Activated CD8-positive, alpha-beta memory T cell treated with anti-CD3 and anti-CD28 coated beads, Interleukin-2, amount 10 ng/mL, durations not matched to agents 7 days and 5 days (primary cell): ENCODE measurements at regions of chr4 and their contacts with region 1.

Region 1: DNA sequence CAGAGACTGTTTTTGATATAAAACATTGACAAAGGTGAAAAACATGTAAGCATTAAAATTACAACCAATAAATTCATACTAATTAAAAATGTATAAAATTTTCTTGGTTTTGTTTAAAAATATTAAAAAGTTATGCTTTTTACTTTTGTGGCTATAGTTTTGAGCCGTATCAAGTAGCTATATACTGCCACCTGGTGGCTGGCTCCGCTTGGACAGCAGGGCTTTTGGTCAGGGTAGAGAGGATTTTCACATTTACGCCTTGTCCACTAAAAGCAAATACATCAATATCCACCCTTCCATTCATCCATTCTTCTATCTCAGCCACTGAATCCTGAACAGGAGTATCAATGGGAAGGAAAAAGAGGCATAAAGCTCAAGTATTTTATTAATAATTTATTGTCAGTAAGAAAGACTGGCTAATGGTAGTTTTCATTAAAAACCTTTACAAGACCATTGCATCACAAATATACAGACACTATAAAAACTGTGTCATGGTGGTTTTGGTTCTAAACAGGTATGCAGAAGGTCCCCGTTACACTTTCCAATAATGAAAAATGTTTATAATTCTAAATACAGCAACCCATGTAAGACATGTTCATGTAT is 32.1 kb upstream of the MTNR1A start:
- DNase-seq: peak; percentile 59
- ATAC-seq: no peak
- H3K4me3 Mint-ChIP-seq: no peak overlapping the region
- H3K27ac Mint-ChIP-seq: no peak overlapping the region
- H3K4me1 Mint-ChIP-seq: no peaks in the 10 kb centered on the region
- H3K27me3 Mint-ChIP-seq: peaks cover 4% of the 10 kb centered on the region

Region 2: DNA sequence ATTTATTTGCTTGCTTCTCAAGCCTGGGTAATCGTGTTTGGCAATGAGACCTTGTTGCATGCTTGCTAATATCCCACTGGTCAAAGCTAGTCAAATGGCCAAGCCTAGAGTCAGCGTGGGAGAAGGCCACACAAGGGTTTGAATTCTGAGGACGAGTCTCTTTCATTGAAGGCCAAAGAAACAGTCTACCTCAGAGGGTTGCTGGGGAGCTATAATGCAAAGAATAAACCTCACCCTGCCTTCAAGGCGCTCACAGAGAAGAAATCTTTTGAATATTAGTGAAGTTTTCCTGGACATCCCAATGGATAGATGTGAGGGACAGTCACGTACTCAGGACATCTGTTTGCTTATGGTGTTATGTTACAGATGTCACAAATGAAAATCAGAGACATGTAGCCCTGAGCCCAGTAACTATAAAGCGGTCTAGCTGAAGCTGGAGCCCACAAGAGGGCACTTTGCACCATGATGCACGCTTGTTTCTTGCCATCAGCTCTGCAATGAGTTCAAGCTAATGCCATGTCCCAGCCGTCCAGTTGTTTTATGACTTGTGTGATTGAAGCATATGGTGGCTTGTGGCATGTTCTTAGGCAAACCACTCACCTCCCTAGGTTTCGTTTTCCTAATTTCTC is 519.6 kb before region 1 on chr4:
- CTCF ChIA-PET with region 1: interaction called, 13 read pairs
- DNase-seq: peak; percentile 71
- ATAC-seq: peak; percentile 87
- H3K4me3 Mint-ChIP-seq: no peak overlapping the region
- H3K27ac Mint-ChIP-seq: no peak overlapping the region
- H3K4me1 Mint-ChIP-seq: peaks cover 21% of the 10 kb centered on the region
- H3K27me3 Mint-ChIP-seq: peaks cover 10% of the 10 kb centered on the region

Region 3: GRCh38 chr4:186297013-186297645 is 290.4 kb before region 1 on chr4:
- CTCF ChIA-PET with region 1: interaction called, 18 read pairs
- DNase-seq: no peak
- ATAC-seq: no peak
- H3K4me3 Mint-ChIP-seq: no peak overlapping the region
- H3K27ac Mint-ChIP-seq: no peak overlapping the region
- H3K4me1 Mint-ChIP-seq: peaks cover 8% of the 10 kb centered on the region
- H3K27me3 Mint-ChIP-seq: peaks cover 19% of the 10 kb centered on the region